Astrocyte of the cerebellum (primary cell): ENCODE measurements at regions of chr19 and their contacts with region 1.

Region 1: DNA sequence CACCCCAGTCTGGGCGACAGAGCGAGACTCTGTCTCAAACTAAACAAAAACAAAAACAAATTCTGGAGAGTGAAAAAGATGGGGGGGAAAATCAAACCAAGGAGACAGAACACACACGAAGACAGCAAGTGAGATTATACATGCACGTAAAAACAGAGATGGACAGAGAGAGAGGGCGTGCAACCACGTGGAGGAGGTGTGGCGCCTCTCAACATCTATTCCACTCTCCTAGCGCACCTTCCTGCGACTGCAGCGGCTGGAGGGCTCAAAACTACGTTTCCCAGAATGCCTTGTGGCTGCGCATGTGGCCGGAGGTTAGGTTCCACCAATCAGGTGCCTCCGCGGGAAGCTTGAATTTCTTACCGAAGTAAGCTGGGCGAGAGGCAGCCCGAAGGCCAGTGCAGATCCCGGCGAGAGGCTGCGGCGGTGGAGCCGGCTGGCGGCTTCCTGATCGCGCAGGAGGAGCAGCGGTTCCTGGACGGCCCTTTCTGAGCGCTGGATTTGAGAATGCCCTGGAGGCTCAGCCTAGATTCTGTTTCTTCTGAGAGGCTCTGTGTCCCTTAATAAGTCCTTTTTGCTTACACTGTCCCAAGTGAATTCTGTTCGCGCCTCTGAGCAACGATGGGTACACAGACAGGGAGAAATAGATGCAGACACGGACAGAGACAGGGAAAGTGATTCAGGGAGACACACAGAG is 13.1 kb upstream of the NANOS2 start:
- DNase-seq: peak; percentile 73
- H3K4me3 ChIP-seq: no peak overlapping the region
- CTCF ChIP-seq: no peak

Region 2: GRCh38 chr19:45865269-45865948 is 62.3 kb before region 1 on chr19:
- in situ Hi-C with region 1: loop called (anchors 5 kb)
- DNase-seq: no peak
- H3K4me3 ChIP-seq: no peak overlapping the region
- CTCF ChIP-seq: no peak

Region 3: GRCh38 chr19:45960595-45961235 is 33.0 kb after region 1 on chr19:
- in situ Hi-C with region 1: loop called (anchors 5 kb)
- DNase-seq: no peak
- H3K4me3 ChIP-seq: no peak overlapping the region
- CTCF ChIP-seq: no peak

Region 4: GRCh38 chr19:46009530-46010510 is 82.1 kb after region 1 on chr19:
- in situ Hi-C with region 1: loop called (anchors 10 kb)
- DNase-seq: peak; percentile 41
- H3K4me3 ChIP-seq: no peak overlapping the region
- CTCF ChIP-seq: peak; percentile 83